Heart right ventricle (tissue), 16 donors: ENCODE measurements at regions of chr10 and their contacts with region 1.

Region 1: GRCh38 chr10:127228195-127228787 is 31.9 kb upstream of the INSYN2A start:
- DNase-seq: no peak
- ATAC-seq: no peak
- H3K4me3 ChIP-seq: no peak overlapping the region
- H3K27ac ChIP-seq: no peak overlapping the region
- H3K4me1 ChIP-seq: no peaks in the 10 kb centered on the region
- H3K27me3 ChIP-seq: no peaks in the 10 kb centered on the region
- CTCF ChIP-seq: no peak

Region 2: DNA sequence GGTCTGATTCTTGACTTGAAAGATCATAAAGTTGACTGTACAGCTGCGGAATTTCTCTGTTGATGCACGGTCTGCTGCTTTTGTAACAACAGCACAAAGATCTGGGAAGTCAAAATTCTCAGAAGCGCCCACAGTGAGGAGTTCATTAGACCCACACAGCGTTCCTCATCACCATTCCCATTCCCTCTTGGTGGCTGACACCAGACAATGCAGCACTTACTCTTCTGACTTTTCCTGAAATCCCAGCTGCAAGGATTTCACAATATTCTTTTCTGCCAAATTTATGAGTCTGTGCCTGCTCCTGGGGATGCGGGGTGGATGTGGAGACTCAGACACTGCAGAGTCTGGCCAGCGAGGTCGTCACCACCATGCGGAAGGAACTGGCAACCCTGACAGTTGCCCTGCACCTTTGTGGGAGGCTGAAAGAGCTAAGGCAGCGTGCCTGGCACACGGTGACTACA is 1098.0 kb before region 1 on chr10:
- intact Hi-C with region 1: no loop called
- DNase-seq: peak; percentile 22 to 48
- ATAC-seq: peak; percentile 71 to 87 (median 76)
- H3K4me3 ChIP-seq: no peak overlapping the region
- H3K27ac ChIP-seq: peak overlapping the region in 7 of 10 donors; percentile 27 to 75 (median 65)
- H3K4me1 ChIP-seq: peaks cover 0 to 29% (median 4%) of the 10 kb centered on the region in 9 donors
- H3K27me3 ChIP-seq: no peaks in the 10 kb centered on the region
- CTCF ChIP-seq: no peak

Region 3: GRCh38 chr10:127102171-127102570 is 126.1 kb before region 1 on chr10:
- intact Hi-C with region 1: no loop called
- DNase-seq: no peak
- ATAC-seq: no peak
- H3K4me3 ChIP-seq: no peak overlapping the region
- H3K27ac ChIP-seq: no peak overlapping the region
- H3K4me1 ChIP-seq: no peaks in the 10 kb centered on the region
- H3K27me3 ChIP-seq: no peaks in the 10 kb centered on the region
- CTCF ChIP-seq: no peak

Region 4: DNA sequence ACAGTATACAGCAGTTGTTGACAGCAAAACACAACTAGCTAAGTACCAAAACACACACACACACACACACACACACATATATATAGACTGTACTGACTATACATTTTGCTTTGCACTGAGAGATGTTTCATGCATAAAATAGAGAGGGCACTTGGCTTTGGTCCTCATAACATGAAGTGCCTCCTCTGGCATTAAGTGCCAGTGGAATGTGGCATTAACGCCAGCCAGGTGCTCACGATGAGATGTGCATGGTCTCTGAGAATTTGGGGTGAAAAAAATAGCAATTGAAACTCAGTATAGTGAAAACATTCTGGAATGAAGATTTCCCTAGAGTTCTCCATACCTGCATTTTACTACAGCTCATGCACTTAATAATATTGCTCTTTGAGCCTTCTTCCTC is 38.1 kb after region 1 on chr10:
- intact Hi-C with region 1: loop called in 1 of 10 experiments (anchors 1 kb)
- DNase-seq: no peak
- ATAC-seq: no peak
- H3K4me3 ChIP-seq: no peak overlapping the region
- H3K27ac ChIP-seq: no peak overlapping the region
- H3K4me1 ChIP-seq: peaks cover 0 to 4% (median 0%) of the 10 kb centered on the region in 9 donors
- H3K27me3 ChIP-seq: no peaks in the 10 kb centered on the region
- CTCF ChIP-seq: no peak

Region 5: GRCh38 chr10:127278001-127278400 is 49.7 kb after region 1 on chr10:
- intact Hi-C with region 1: no loop called
- DNase-seq: no peak
- ATAC-seq: no peak
- H3K4me3 ChIP-seq: no peak overlapping the region
- H3K27ac ChIP-seq: no peak overlapping the region
- H3K4me1 ChIP-seq: peaks cover 0 to 7% (median 0%) of the 10 kb centered on the region in 9 donors
- H3K27me3 ChIP-seq: no peaks in the 10 kb centered on the region
- CTCF ChIP-seq: no peak